IMR-90 (cell line): ENCODE measurements at regions of chr12 and their contacts with region 1.

Region 1: GRCh38 chr12:117025481-117026151 is 73.6 kb downstream of the TESC start:
- DNase-seq: peak; percentile 61
- ATAC-seq: peak; percentile 97
- H3K4me3 ChIP-seq: no peak overlapping the region
- H3K27ac ChIP-seq: no peak overlapping the region
- H3K4me1 ChIP-seq: no peaks in the 10 kb centered on the region; the same call in 1 of the 2 replicates
- H3K27me3 ChIP-seq: no peaks in the 10 kb centered on the region
- CTCF ChIP-seq: peak; percentile 97
- POLR2A ChIP-seq: no peak
- RAD21 ChIP-seq: peak; percentile 77

Region 2: DNA sequence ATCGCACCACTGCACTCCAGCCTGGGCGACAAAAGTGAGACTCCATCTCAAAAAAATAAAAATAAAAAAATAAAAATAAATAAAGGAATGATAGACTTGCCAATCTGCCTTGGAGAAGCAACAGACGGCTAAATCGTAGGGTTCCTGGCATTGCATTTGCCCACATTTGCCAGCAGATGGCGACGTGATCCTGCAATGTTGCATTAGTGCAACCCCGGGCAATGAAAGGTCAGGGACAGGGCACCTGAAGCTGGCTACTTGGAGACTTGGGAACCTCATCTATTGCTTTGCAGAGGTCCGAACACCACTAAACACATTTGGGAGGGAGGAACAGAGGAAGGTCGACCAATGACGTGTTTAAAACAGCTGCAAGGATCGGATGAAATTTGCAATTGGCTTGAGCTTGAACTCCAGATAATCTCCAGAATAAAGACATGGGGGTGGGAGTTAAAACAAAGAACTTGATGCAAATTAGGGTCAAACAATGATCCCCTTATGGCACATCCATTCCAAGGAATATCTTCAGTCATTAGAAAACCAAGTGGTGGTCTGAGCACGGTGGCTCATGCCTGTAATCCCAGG is 322.3 kb before region 1 on chr12:
- CTCF ChIA-PET with region 1: no interaction called
- POLR2A ChIA-PET with region 1: no interaction called
- dilution Hi-C with region 1: no loop called
- in situ Hi-C with region 1: no loop called
- intact Hi-C with region 1: loop called (anchors 1 kb)
- DNase-seq: peak; percentile 55
- ATAC-seq: peak; percentile 91
- H3K4me3 ChIP-seq: no peak overlapping the region
- H3K27ac ChIP-seq: no peak overlapping the region
- H3K4me1 ChIP-seq: no peaks in the 10 kb centered on the region
- H3K27me3 ChIP-seq: no peaks in the 10 kb centered on the region; the same call in 1 of the 2 replicates
- CTCF ChIP-seq: peak; percentile 89
- POLR2A ChIP-seq: 0 out of 2 replicates have a peak, but pooled peaks have one; percentile 25
- RAD21 ChIP-seq: peak; percentile 88

Region 3: DNA sequence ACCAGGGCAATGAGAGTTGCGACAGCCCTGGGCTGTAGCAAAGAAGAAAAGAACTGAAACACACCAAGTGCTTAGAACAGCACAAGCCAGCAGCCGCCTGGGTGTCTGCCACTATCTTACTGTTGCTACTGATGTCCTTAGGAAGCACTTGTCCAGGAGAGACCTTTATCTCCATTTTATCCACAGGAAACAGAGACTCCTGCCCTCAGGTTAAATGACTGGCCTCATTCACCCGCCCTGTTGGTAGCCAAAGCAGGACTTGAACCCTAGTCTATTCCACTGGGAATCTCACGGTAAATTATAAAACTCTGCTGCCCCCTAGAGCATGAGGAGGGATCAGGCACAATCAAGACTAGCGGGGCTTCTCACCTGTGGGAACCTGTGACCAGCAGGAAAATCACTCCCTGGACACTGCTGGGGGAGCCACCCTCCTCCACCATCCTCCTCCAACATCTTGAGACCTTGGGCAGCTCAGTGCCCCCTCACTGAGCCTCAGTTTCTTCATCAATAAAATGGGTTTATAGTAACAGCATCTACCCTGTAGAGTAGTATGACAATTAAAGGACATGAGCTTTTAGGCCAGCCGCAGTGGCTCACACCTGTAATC is 94.1 kb after region 1 on chr12:
- CTCF ChIA-PET with region 1: no interaction called
- POLR2A ChIA-PET with region 1: no interaction called
- dilution Hi-C with region 1: no loop called
- in situ Hi-C with region 1: no loop called
- intact Hi-C with region 1: loop called (anchors 1 kb)
- DNase-seq: no peak
- ATAC-seq: 0 out of 2 replicates have a peak, but pooled peaks have one; percentile 49
- H3K4me3 ChIP-seq: no peak overlapping the region
- H3K27ac ChIP-seq: no peak overlapping the region
- H3K4me1 ChIP-seq: no peaks in the 10 kb centered on the region
- H3K27me3 ChIP-seq: peaks cover 4% of the 10 kb centered on the region; the same call in 1 of the 2 replicates
- CTCF ChIP-seq: peak; percentile 57
- POLR2A ChIP-seq: no peak
- RAD21 ChIP-seq: peak; percentile 62

Region 4: DNA sequence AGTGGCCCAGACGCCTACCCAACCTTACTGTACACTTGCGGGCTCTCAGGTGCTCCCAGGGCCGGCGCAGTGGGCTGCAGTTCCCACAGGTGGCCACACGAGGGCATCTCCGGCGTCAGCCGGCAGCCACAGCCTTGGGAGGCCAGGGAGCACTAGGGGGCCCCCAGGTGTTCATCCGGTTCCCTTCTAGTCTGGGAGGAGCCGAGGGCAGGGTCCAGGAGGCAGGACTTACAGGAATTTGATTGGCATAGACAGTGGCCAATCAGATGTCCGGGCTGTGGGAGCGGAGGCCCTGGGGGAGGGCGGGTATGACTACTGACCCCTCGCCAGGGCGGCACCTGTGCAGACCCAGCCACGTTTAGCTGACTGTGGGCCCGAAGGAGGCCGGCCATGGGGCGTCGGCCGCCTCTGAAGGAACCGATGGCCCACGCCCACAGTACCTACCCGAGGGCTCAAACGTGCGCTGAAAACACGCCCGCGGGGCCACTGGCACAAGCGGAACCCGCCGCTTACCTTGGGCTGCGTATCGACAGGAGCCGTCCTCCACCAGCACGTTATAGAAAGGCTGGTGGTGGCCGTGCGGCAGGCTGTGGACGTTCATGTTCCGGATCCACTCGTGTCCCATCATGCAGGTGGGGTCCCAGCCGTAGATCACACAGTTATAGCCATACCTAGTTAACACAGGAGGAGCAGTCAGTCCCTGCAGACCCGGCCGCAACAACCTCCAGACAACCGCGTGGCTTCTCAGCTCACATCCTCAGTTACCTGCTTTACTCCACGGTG is 129.9 kb after region 1 on chr12:
- CTCF ChIA-PET with region 1: no interaction called
- POLR2A ChIA-PET with region 1: no interaction called
- dilution Hi-C with region 1: no loop called
- in situ Hi-C with region 1: no loop called
- intact Hi-C with region 1: loop called (anchors 5 kb)
- DNase-seq: peak; percentile 11
- ATAC-seq: peak; percentile 55
- H3K4me3 ChIP-seq: no peak overlapping the region
- H3K27ac ChIP-seq: no peak overlapping the region
- H3K4me1 ChIP-seq: no peaks in the 10 kb centered on the region
- H3K27me3 ChIP-seq: no peaks in the 10 kb centered on the region
- CTCF ChIP-seq: peak; percentile 48
- POLR2A ChIP-seq: no peak
- RAD21 ChIP-seq: no peak

Region 5: DNA sequence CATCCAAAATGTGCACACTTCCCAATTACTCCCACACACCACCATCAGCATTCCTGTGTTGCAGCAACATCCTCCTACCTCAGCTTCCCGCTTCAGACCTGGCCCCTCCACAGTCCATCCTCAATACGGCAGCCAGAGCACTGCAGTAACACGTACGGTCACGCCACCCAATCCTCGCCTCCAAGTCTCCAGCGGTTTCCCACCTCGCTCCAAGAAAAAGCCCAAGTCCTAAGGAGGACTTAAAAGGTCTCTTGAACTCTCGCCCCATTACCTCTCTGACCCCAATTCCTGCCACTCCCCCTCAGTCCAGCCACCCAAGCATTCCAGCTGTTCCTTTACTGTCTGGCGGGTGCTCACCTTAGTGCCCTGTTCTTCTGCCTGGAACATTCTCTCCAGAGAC is 152.7 kb after region 1 on chr12:
- CTCF ChIA-PET with region 1: no interaction called
- POLR2A ChIA-PET with region 1: no interaction called
- dilution Hi-C with region 1: no loop called
- in situ Hi-C with region 1: no loop called
- intact Hi-C with region 1: no loop called
- DNase-seq: no peak
- ATAC-seq: no peak
- H3K4me3 ChIP-seq: no peak overlapping the region
- H3K27ac ChIP-seq: no peak overlapping the region
- H3K4me1 ChIP-seq: peaks cover 7% of the 10 kb centered on the region
- H3K27me3 ChIP-seq: no peaks in the 10 kb centered on the region
- CTCF ChIP-seq: no peak
- POLR2A ChIP-seq: no peak
- RAD21 ChIP-seq: no peak

Region 6: DNA sequence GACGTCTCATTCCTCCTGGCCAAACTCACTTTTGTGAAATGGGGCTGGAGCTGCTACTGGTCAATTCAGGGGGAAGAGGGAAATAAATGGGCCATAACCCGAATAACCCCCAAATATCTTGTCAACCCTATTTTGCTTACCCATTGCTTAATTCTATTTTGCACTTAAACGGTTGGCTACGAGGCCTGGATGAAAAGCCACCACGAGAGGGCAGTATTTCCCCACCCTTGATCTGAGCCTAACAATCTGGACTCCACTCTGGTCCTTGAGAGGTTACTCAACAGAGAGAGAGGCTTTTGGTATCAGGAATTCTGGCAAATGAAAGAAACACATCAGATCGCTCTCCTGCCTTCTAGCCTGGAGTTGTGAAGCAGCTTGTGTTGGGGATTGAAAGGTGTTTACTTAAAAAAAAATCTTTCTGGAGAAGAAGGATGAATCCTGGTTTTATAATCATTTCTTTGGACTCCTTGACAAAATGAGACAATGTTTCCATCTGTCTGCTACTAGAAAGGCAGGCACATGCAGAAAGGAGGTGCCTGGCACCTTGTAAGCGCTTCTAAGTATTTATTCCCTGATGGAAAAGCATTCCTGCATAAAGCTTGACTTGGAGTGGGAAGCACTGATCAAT is 187.1 kb after region 1 on chr12:
- CTCF ChIA-PET with region 1: no interaction called
- POLR2A ChIA-PET with region 1: no interaction called
- dilution Hi-C with region 1: no loop called
- in situ Hi-C with region 1: no loop called
- intact Hi-C with region 1: loop called (anchors 1 kb)
- DNase-seq: peak; percentile 71
- ATAC-seq: peak; percentile 97
- H3K4me3 ChIP-seq: no peak overlapping the region
- H3K27ac ChIP-seq: no peak overlapping the region
- H3K4me1 ChIP-seq: no peaks in the 10 kb centered on the region
- H3K27me3 ChIP-seq: peaks cover 7% of the 10 kb centered on the region; the same call in 1 of the 2 replicates
- CTCF ChIP-seq: peak; percentile 92
- POLR2A ChIP-seq: no peak
- RAD21 ChIP-seq: peak; percentile 79

Region 7: GRCh38 chr12:117836999-117837736 is 811.6 kb after region 1 on chr12:
- CTCF ChIA-PET with region 1: no interaction called
- POLR2A ChIA-PET with region 1: no interaction called
- dilution Hi-C with region 1: no loop called
- in situ Hi-C with region 1: loop called (anchors 25 kb)
- intact Hi-C with region 1: no loop called
- DNase-seq: peak; percentile 60
- ATAC-seq: peak; percentile 90
- H3K4me3 ChIP-seq: no peak overlapping the region
- H3K27ac ChIP-seq: no peak overlapping the region
- H3K4me1 ChIP-seq: no peaks in the 10 kb centered on the region
- H3K27me3 ChIP-seq: no peaks in the 10 kb centered on the region
- CTCF ChIP-seq: peak; percentile 86
- POLR2A ChIP-seq: no peak
- RAD21 ChIP-seq: peak; percentile 85